ENCODE measurements at regions of chr16 and their contacts with region 1.

Region 1: DNA sequence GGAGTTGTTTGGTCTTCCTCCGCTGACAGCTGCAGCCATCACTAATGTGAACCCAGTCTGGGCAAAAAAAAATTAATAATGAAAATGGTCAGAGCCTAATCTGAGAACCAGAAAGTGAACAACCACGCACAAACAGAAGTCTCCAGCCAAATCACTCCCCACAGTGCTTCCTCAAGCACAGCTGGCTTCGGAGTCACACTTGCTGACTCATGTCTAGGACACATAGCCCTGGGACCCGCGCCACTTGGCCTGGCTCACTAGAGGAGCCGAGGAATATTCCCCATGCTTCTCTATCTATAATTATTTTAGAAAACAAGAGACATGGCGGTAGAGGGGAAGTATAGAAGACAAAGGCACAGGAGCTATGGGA is 109.1 kb downstream of the ZFHX3 start:
- DNase-seq: peak; percentile 66 to 67
- ATAC-seq: peak; percentile 31

Region 2: GRCh38 chr16:73036074-73036826 is 97.5 kb after region 1 on chr16:
- intact Hi-C with region 1: loop called in 1 of 2 experiments (anchors 10 kb)
- DNase-seq: no peak
- ATAC-seq: no peak

Measured in left colon (tissue), 2 donors.